Activated CD4-positive, alpha-beta memory T cell treated with anti-CD3 and anti-CD28 coated beads, Interleukin-2, amount 10 ng/mL, durations not matched to agents 7 days and 5 days (primary cell): ENCODE measurements at regions of chr9 and their contacts with region 1.

Region 1: GRCh38 chr9:97921959-97922724 is at the start of gene TRMO:
- DNase-seq: peak; percentile 98
- H3K4me3 Mint-ChIP-seq: peak within 1 kb of the TSS; percentile 93
- H3K27ac Mint-ChIP-seq: peak within 1 kb of the TSS; percentile 98
- H3K4me1 Mint-ChIP-seq: peaks cover 51% of the 10 kb centered on the region
- H3K27me3 Mint-ChIP-seq: peaks cover 4% of the 10 kb centered on the region
- total RNA-seq, gene TRMO: 25.4 to 27.4 TPM

Region 2: GRCh38 chr9:97625620-97626019 is 296.5 kb before region 1 on chr9:
- CTCF ChIA-PET with region 1: no interaction called
- POLR2A ChIA-PET with region 1: no interaction called
- DNase-seq: no peak
- H3K4me3 Mint-ChIP-seq: no peak overlapping the region
- H3K27ac Mint-ChIP-seq: no peak overlapping the region
- H3K4me1 Mint-ChIP-seq: peaks cover 5% of the 10 kb centered on the region
- H3K27me3 Mint-ChIP-seq: no peaks in the 10 kb centered on the region

Region 3: DNA sequence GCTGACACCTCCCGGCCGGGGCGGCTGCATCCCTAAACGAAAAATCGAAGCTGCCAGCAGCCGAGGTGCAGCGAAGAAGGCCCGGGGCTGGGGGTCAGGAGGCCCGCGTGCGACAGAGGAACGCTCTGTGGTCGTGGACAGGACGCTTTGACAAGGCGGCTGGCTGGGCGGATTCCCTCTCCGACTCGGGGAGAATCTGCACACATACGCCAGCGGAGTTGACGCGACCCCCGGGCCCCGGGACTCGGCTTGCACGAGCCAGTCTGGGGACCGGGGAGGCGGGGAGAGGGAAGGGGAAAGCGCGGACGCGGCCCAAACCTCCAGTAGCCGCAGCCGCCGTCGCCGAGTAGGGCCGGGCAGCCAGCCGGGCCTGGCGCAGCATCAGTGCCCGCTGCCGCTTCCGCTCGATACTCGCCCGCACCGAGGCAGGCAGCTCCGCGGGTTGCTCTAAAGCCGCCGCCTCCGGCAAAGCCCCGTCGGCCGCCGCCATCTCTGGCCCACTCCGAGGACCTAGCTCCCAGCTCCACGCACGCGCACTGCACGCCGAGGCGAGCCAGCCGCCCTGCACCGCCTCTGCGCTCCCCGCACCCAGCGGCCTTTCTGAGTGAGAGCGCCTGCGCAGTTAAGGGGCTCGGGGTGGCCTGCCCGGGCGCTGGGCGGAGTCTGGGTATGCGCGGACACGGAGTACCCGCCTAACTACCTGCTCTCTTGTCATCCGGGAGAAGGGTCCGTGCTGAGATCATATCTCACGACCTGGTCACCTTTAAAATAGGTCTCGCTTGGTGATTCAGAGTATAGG is 225.1 kb before region 1 on chr9 and contains the start of gene XPA:
- CTCF ChIA-PET with region 1: no interaction called
- POLR2A ChIA-PET with region 1: interaction called, 17 read pairs
- DNase-seq: peak; percentile 96
- H3K4me3 Mint-ChIP-seq: peak within 1 kb of the TSS; percentile 87
- H3K27ac Mint-ChIP-seq: peak within 1 kb of the TSS; percentile 66
- H3K4me1 Mint-ChIP-seq: peaks cover 43% of the 10 kb centered on the region
- H3K27me3 Mint-ChIP-seq: peaks cover 6% of the 10 kb centered on the region
- total RNA-seq, gene XPA: 12.1 to 12.4 TPM

Region 4: GRCh38 chr9:97786341-97786740 is 135.8 kb before region 1 on chr9:
- CTCF ChIA-PET with region 1: no interaction called
- POLR2A ChIA-PET with region 1: no interaction called
- DNase-seq: no peak
- H3K4me3 Mint-ChIP-seq: no peak overlapping the region
- H3K27ac Mint-ChIP-seq: no peak overlapping the region
- H3K4me1 Mint-ChIP-seq: no peaks in the 10 kb centered on the region
- H3K27me3 Mint-ChIP-seq: peaks cover 14% of the 10 kb centered on the region

Region 5: DNA sequence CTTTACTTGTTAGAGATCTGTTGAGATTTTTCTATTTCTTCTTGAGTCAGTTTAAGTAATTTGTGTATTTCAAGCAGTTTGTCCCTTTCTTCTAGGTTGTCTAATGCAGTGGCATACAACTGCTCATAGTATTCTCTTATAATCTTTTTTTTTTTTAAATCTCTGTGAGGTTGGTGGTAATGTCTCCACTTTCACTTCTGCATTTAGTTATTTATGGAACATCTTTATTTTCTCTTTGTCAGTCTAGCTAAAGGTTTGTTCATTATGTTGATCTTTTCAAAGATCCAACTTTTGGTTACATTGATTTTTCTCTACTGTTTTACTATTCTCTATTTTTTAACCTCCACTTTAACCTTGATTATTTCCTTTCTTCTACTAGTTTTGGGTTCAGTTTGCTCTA is 55.3 kb before region 1 on chr9:
- CTCF ChIA-PET with region 1: no interaction called
- POLR2A ChIA-PET with region 1: no interaction called
- DNase-seq: no peak
- H3K4me3 Mint-ChIP-seq: no peak overlapping the region
- H3K27ac Mint-ChIP-seq: no peak overlapping the region
- H3K4me1 Mint-ChIP-seq: no peaks in the 10 kb centered on the region
- H3K27me3 Mint-ChIP-seq: peaks cover 52% of the 10 kb centered on the region

Region 6: GRCh38 chr9:97900738-97901565 is 21.2 kb before region 1 on chr9:
- CTCF ChIA-PET with region 1: interaction called, 175 read pairs
- POLR2A ChIA-PET with region 1: interaction called, 360 read pairs
- DNase-seq: no peak
- H3K4me3 Mint-ChIP-seq: no peak overlapping the region
- H3K27ac Mint-ChIP-seq: peak overlapping the region; percentile 2
- H3K4me1 Mint-ChIP-seq: peaks cover 46% of the 10 kb centered on the region
- H3K27me3 Mint-ChIP-seq: no peaks in the 10 kb centered on the region

Region 7: GRCh38 chr9:97943308-97943855 is 21.2 kb after region 1 on chr9:
- CTCF ChIA-PET with region 1: interaction called, 15 read pairs
- POLR2A ChIA-PET with region 1: interaction called, 9 read pairs
- DNase-seq: no peak
- H3K4me3 Mint-ChIP-seq: no peak overlapping the region
- H3K27ac Mint-ChIP-seq: no peak overlapping the region
- H3K4me1 Mint-ChIP-seq: peaks cover 5% of the 10 kb centered on the region
- H3K27me3 Mint-ChIP-seq: peaks cover 27% of the 10 kb centered on the region

Region 8: GRCh38 chr9:98010445-98010844 is 88.3 kb after region 1 on chr9:
- CTCF ChIA-PET with region 1: interaction called, 8 read pairs
- POLR2A ChIA-PET with region 1: interaction called, 13 read pairs
- DNase-seq: no peak
- H3K4me3 Mint-ChIP-seq: no peak overlapping the region
- H3K27ac Mint-ChIP-seq: no peak overlapping the region
- H3K4me1 Mint-ChIP-seq: peaks cover 33% of the 10 kb centered on the region
- H3K27me3 Mint-ChIP-seq: no peaks in the 10 kb centered on the region

Region 9: GRCh38 chr9:98255578-98256296 is 333.6 kb after region 1 on chr9 and contains the start of gene TBC1D2:
- CTCF ChIA-PET with region 1: interaction called, 25 read pairs
- POLR2A ChIA-PET with region 1: interaction called, 35 read pairs
- DNase-seq: peak; percentile 98
- H3K4me3 Mint-ChIP-seq: peak within 1 kb of the TSS; percentile 93
- H3K27ac Mint-ChIP-seq: peak within 1 kb of the TSS; percentile 99
- H3K4me1 Mint-ChIP-seq: peaks cover 43% of the 10 kb centered on the region
- H3K27me3 Mint-ChIP-seq: no peaks in the 10 kb centered on the region
- total RNA-seq, gene TBC1D2: 11.0 to 11.9 TPM

Region 10: GRCh38 chr9:98302938-98303622 is 380.9 kb after region 1 on chr9:
- CTCF ChIA-PET with region 1: no interaction called
- POLR2A ChIA-PET with region 1: no interaction called
- DNase-seq: no peak
- H3K4me3 Mint-ChIP-seq: no peak overlapping the region
- H3K27ac Mint-ChIP-seq: no peak overlapping the region
- H3K4me1 Mint-ChIP-seq: peaks cover 3% of the 10 kb centered on the region
- H3K27me3 Mint-ChIP-seq: peaks cover 3% of the 10 kb centered on the region